Activated T-helper 1 cell treated with anti-CD3 and anti-CD28 coated beads, Interleukin-12 subunit alpha, Interleukin-12 subunit beta, Interleukin-2, Interleukin-4 antibody, amounts not matched to agents 30 ng/mL and 10 ng/mL and 1 ng/mL, durations not matched to agents 14 hours and 24 hours and 36 hours (primary cell): ENCODE measurements at regions of chr4 and their contacts with region 1.

Region 1: DNA sequence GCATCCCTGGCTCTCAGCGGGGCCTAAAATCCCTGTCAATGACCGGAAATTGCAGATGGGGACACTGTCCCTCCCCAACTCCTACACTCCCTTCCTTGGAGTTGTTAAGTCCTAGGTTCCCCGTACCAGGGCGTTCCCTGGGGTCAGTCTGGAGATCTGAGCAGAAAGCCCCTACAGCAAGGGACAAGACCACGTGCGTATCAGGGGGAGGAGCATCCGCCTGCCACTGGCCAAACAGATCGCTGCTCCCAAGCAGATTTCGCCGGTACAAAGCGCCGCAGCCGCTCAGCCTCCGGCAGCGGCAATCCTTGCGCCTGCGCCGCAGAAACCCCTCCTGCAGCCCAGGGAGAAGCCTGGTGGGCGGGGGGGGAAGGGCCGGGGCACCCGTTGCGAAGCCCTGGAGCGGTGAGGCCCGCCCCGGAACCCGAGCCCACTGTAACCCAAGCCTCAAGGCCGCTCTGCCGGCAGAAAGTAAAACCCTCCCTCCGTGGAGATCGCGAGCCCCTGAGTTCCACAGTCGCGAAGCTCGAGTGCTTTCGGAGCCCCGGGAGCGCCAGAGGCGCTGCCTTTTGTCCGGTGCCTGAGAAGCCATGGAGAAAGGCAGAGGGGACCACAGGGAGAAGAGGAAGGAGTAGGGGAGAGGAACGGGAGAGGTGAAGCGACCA is 2.7 kb downstream of the CRMP1 start:
- DNase-seq: no peak
- H3K4me3 Mint-ChIP-seq: no peak overlapping the region
- H3K27ac Mint-ChIP-seq: no peak overlapping the region
- H3K4me1 Mint-ChIP-seq: no peaks in the 10 kb centered on the region
- H3K27me3 Mint-ChIP-seq: peaks cover 62% of the 10 kb centered on the region

Region 2: GRCh38 chr4:4859390-4859842 is 1030.8 kb before region 1 on chr4 and contains the start of gene MSX1:
- intact Hi-C with region 1: loop called (anchors 5 kb)
- DNase-seq: no peak
- H3K4me3 Mint-ChIP-seq: peak within 1 kb of the TSS; percentile 56
- H3K27ac Mint-ChIP-seq: peak within 1 kb of the TSS; percentile 48
- H3K4me1 Mint-ChIP-seq: no peaks in the 10 kb centered on the region
- H3K27me3 Mint-ChIP-seq: peaks cover 70% of the 10 kb centered on the region
- total RNA-seq, gene MSX1: not detected in 2 replicates